ENCODE measurements at regions of chr17 and their contacts with region 1.

Region 1: DNA sequence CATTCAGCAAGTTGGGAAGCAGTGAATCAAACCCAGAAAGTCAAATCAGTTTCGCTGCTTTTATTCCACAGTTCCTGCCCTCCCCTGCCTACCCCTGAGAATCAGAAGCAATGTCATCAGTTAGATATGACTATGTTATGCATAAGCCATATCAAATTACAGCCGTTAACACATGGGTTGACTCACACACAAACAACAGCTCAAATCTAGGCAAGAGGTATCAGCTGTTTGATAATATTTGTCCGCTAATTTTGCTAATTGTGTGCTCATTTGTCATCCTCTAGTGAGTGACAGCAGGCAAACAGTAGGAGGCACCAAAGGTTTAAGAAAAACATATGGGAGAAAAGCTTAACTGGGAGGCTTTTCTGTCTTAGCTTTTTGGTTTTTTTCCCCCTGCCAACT is 327.4 kb upstream of the CCL2 start:
- DNase-seq: no peak
- ATAC-seq: no peak

Region 2: GRCh38 chr17:34146440-34147043 is 218.8 kb after region 1 on chr17:
- intact Hi-C with region 1: loop called (anchors 2 kb)
- DNase-seq: peak; percentile 53
- ATAC-seq: peak; percentile 75

Region 3: GRCh38 chr17:34163646-34164045 is 235.9 kb after region 1 on chr17:
- intact Hi-C with region 1: loop called (anchors 5 kb)
- DNase-seq: no peak
- ATAC-seq: no peak

Region 4: DNA sequence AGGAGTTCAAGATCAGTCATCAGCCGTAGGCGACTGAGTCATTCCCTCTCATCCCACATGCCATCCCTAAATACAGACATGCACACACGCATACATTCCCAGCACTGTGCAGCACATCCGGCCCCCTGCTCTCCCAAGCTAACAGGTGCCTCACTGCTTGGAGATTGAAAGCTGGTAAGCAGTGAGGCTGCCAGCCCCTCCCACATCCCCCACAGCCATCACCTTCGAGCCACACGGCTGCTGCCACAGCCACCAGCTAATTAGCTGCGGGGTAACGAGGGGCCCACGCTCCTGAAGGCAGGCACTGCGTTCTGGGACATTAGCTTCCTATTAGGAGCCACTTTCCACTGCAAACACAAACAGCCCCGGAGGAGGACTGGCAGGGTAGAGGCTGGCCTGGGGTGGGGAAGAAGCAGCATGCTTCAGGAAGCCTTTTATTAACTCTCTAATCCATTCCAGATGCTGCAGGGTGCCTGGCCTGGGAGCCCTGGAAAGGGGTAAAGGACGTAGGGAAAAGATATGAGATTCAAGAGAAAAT is 853.9 kb after region 1 on chr17:
- intact Hi-C with region 1: no loop called
- DNase-seq: no peak
- ATAC-seq: no peak

Measured in Right ventricle myocardium superior (tissue), 1 donor.